Heart right ventricle (tissue), 16 donors: ENCODE measurements at regions of chr19 and their contacts with region 1.

Region 1: DNA sequence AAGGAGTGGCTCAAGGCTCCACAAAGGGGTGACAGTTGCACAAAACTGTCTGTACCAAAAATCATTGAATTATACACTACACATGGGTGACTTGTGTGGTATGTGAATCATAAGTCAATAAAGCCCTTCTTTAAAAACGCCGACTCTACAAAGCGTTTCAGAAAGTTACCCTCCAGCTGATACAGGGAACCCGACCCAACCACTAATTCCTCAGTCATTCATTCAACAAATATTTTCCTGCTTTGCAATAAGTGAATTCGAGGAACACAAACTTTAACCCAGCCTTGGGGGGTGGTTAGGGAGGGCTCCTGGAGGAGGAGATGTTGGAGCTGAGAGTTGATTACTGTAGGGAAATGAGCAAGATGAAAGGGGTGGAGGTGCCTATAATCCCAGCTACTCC is 32.0 kb downstream of the LTBP4 start:
- DNase-seq: no peak
- ATAC-seq: no peak
- H3K4me3 ChIP-seq: no peak overlapping the region
- H3K27ac ChIP-seq: peak overlapping the region in 1 of 10 donors; percentile 58
- H3K4me1 ChIP-seq: peaks cover 0 to 19% (median 7%) of the 10 kb centered on the region in 9 donors
- H3K27me3 ChIP-seq: no peaks in the 10 kb centered on the region
- CTCF ChIP-seq: no peak

Region 2: DNA sequence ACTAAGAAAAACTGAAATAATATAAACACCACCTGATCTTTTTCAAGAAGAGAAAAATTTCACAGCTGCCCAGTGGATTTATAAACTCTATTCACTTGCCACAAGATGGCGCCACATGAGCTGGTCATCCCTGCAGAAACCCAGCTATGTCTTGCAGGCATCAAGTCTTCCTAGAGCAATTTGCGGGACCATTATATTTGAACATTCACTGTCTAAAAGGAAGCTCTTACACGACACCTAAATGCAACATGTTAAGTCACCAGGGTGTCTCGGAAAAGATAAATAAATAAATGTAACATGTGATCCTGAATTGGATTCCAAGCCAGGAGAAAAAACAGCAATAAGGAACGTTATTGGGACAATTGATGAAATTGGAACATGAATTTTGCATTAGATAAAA is 327.8 kb before region 1 on chr19:
- intact Hi-C with region 1: loop called in 6 of 10 experiments (anchors 5 to 10 kb)
- DNase-seq: peak; percentile 62 to 85
- ATAC-seq: peak; percentile 67 to 90 (median 79)
- H3K4me3 ChIP-seq: no peak overlapping the region
- H3K27ac ChIP-seq: no peak overlapping the region
- H3K4me1 ChIP-seq: peaks cover 0 to 4% (median 0%) of the 10 kb centered on the region in 9 donors
- H3K27me3 ChIP-seq: no peaks in the 10 kb centered on the region
- CTCF ChIP-seq: peak; percentile 59 to 87 (median 81)

Region 3: GRCh38 chr19:40529093-40529954 is 103.9 kb before region 1 on chr19:
- intact Hi-C with region 1: loop called in 5 of 10 experiments (anchors 5 to 10 kb)
- DNase-seq: peak; percentile 81 to 86
- ATAC-seq: peak; percentile 86 to 96 (median 90)
- H3K4me3 ChIP-seq: peak overlapping the region in 9 of 10 donors; percentile 44 to 65 (median 59)
- H3K27ac ChIP-seq: peak overlapping the region in 2 of 10 donors; percentile 55 to 72
- H3K4me1 ChIP-seq: peaks cover 0 to 14% (median 9%) of the 10 kb centered on the region in 9 donors
- H3K27me3 ChIP-seq: peaks cover 0 to 17% (median 0%) of the 10 kb centered on the region in 7 donors
- CTCF ChIP-seq: peak; percentile 94 to 98 (median 96)

Region 4: DNA sequence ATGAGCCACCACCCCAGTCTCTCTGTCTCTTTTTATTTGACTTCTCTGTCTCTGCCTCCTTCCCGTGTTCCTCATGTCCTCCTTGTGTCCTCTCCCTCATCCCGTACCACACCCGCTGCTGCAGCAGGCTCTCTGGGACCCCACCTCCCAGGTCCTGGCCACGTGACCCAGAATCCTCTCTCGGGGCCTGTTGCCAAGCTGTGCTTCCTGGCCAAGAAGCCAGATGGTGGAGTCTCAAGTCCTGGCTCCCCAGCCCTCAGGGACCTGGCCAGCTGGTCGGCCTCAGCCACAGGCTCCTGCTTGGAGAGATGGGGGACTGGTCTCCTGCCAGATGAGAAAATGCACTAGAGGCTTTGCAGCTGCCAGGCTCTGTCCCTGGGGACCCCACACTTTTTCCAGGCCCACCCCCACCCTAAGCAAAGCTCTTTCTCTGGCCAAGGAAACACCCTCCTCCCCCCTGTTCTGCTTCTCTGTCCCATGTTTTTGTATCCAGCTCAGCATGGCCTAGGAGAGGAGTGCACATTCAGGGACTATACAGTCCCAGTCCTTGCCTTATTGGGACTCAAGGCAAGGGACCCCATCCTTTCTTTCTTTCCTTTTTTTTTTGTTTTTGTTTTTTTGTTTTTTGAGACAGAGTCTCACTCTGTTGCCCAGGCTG is 90.9 kb before region 1 on chr19:
- intact Hi-C with region 1: loop called in 3 of 10 experiments (anchors 5 to 10 kb)
- DNase-seq: peak; percentile 76 to 86
- ATAC-seq: peak; percentile 77 to 92 (median 86)
- H3K4me3 ChIP-seq: no peak overlapping the region
- H3K27ac ChIP-seq: peak overlapping the region in 1 of 10 donors; percentile 40
- H3K4me1 ChIP-seq: peaks cover 0 to 22% (median 0%) of the 10 kb centered on the region in 9 donors
- H3K27me3 ChIP-seq: peaks cover 0 to 4% (median 0%) of the 10 kb centered on the region in 7 donors
- CTCF ChIP-seq: peak in 2 of 9 donors; percentile 6 to 18

Region 5: DNA sequence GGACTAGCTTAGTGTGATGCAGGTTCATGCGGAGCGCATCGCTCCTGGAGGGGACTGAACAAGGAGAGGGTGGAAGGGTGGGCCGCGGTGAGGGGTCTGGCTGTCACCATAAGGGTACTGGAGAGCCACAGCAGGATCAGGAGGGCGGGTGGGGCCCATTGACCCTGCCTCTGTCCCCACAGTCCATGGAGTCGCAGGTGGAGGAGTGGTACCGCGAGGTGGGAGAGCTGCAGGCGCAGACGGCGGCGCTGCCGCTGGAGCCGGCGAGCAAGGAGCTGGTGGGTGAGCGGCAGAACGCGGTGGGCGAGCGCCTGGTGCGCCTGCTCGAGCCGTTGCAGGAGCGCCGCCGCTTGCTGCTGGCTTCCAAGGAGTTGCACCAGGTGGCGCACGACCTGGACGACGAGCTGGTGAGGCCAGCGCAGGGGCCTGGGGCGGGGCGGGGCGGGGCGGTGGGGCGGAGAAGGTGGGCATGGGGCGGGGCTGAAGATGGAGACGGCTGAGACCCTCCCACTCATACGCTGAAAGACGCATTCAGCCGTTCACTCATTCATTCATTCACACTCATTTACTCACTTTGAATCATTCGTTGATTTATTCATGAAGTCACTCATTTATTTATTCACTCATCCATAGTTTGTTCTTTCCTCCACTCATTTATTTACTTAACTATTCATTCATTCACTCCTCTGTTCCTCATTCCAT is 84.0 kb before region 1 on chr19:
- intact Hi-C with region 1: loop called in 2 of 10 experiments (anchors 5 to 10 kb)
- DNase-seq: peak; percentile 37 to 66
- ATAC-seq: peak in 5 of 8 donors; percentile 33 to 77 (median 67)
- H3K4me3 ChIP-seq: no peak overlapping the region
- H3K27ac ChIP-seq: no peak overlapping the region
- H3K4me1 ChIP-seq: peaks cover 0 to 6% (median 0%) of the 10 kb centered on the region in 9 donors
- H3K27me3 ChIP-seq: peaks cover 0 to 57% (median 34%) of the 10 kb centered on the region in 7 donors
- CTCF ChIP-seq: peak in 8 of 9 donors; percentile 9 to 58 (median 52)

Region 6: DNA sequence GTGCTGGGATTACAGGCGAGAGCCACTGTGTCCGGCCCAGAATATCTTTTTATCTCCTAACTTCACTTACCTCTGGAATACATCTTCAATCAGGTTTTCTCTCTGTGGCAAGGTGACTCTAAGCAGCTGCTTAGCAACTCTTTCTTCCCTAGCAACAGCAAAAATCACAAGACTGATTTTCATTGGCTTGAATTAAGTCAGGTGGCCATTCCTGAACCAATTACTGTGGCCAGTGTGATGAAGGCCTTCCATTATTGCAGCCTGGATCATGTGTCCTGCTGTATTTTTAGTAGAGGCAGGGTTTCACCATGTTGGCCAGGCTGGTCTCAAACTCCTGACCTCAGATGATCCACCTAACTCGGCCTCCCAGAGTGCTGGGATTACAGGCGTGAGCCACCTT is 41.0 kb before region 1 on chr19:
- intact Hi-C with region 1: no loop called
- DNase-seq: no peak
- ATAC-seq: peak in 2 of 8 donors; percentile 24 to 25
- H3K4me3 ChIP-seq: no peak overlapping the region
- H3K27ac ChIP-seq: no peak overlapping the region
- H3K4me1 ChIP-seq: peaks cover 2 to 11% (median 7%) of the 10 kb centered on the region in 9 donors
- H3K27me3 ChIP-seq: peaks cover 0 to 23% (median 12%) of the 10 kb centered on the region in 7 donors
- CTCF ChIP-seq: no peak

Region 7: DNA sequence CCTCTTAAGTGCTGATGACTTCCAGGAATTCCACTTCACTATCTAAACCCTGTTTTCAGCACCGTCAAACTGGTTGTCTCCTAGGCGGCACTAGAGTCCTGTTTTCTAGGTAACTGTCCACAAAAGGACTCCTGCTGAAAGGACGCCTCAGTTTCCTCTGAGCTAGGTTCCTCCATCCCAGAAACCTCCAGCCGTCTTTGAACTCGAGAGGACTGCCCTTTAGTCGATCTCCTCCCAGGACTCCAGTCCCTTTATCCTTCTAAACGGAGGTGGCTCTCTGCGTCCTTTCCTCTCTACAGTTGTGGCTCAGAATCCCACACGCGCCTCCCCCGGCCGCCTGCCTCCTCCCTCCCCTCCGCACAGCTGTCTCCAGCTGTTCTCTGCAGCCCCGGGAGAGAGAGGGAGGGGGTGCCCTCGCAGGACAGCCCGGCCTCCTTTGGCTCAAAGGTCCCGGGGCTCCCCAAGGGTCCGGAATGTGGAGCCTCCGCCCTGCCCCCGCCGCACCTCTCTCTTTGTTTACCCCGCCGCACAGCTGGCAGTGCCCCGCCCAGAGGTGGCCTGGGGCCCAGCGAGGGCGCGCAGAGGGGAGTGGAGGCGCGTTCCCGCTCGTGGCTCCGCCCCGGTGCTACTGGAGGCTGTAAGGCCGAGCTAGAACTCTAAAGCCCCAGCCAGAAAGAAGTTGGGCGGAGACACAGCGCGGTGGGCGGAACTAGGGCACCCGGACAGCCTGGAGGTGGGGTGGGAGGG is 29.6 kb before region 1 on chr19:
- intact Hi-C with region 1: loop called in 3 of 10 experiments (anchors 2 to 5 kb)
- DNase-seq: peak; percentile 98
- ATAC-seq: peak; percentile 72 to 85 (median 81)
- H3K4me3 ChIP-seq: peak overlapping the region in 9 of 10 donors; percentile 40 to 81 (median 72)
- H3K27ac ChIP-seq: peak overlapping the region; percentile 49 to 96 (median 90)
- H3K4me1 ChIP-seq: peaks cover 26 to 88% (median 74%) of the 10 kb centered on the region in 9 donors
- H3K27me3 ChIP-seq: peaks cover 0 to 68% (median 0%) of the 10 kb centered on the region in 7 donors
- CTCF ChIP-seq: no peak